ENCODE measurements at regions of chr17 and their contacts with region 1.

Region 1: GRCh38 chr17:44438636-44439035 is 49.2 kb upstream of the ITGA2B start:
- DNase-seq: peak in 18 of 35 experiments; percentile 3 to 52 (median 15)
- ATAC-seq: no peak
- H3K4me3 ChIP-seq: no peak overlapping the region
- H3K4me3 Mint-ChIP-seq: peak overlapping the region in 1 of 3 donors; percentile 14
- H3K27ac ChIP-seq: peak overlapping the region; percentile 42
- H3K27ac Mint-ChIP-seq: peak overlapping the region; percentile 21 to 56
- H3K4me1 ChIP-seq: peaks cover 2 to 8% of the 10 kb centered on the region in 2 experiments
- H3K4me1 Mint-ChIP-seq: peaks cover 15 to 28% (median 27%) of the 10 kb centered on the region in 3 donors
- H3K27me3 ChIP-seq: no peaks in the 10 kb centered on the region
- H3K27me3 Mint-ChIP-seq: no peaks in the 10 kb centered on the region

Region 2: GRCh38 chr17:44424828-44425461 is 13.7 kb before region 1 on chr17:
- CTCF ChIA-PET with region 1: interaction called in 1 of 2 experiments, 7 read pairs
- POLR2A ChIA-PET with region 1: interaction called in 1 of 2 experiments, 11 read pairs
- DNase-seq: no peak
- ATAC-seq: no peak
- H3K4me3 ChIP-seq: no peak overlapping the region
- H3K4me3 Mint-ChIP-seq: no peak overlapping the region
- H3K27ac ChIP-seq: no peak overlapping the region
- H3K27ac Mint-ChIP-seq: peak overlapping the region; percentile 44 to 56
- H3K4me1 ChIP-seq: no peaks in the 10 kb centered on the region
- H3K4me1 Mint-ChIP-seq: peaks cover 8 to 19% (median 18%) of the 10 kb centered on the region in 3 donors
- H3K27me3 ChIP-seq: no peaks in the 10 kb centered on the region
- H3K27me3 Mint-ChIP-seq: no peaks in the 10 kb centered on the region

Measured in T-cell (primary cell).